SK-N-SH (cell line): ENCODE measurements at regions of chr11 and their contacts with region 1.

Region 1: DNA sequence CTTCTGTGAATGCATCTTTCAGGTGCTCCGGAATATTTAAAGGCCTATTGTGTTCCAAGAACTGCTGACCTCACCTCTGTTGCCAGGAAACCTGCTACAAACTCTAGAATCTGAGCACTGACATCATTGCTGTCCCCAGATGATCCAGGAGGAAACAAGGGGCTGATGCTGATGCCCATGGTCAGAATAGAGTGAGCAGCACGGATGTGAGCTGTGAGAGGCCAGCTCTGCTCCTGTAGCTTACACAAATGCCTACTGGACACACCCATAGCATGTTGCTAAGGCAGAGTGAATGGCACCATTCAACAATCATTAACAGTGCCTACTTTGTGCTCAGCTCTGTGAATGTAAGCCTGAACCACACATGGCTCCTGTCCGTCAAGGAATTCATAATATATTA is 276.7 kb upstream of the API5 start:
- DNase-seq: no peak
- H3K4me3 ChIP-seq: no peak overlapping the region
- H3K27ac ChIP-seq: no peak overlapping the region
- H3K4me1 ChIP-seq: no peaks in the 10 kb centered on the region; a peak in 1 of 4 replicates
- H3K27me3 ChIP-seq: no peaks in the 10 kb centered on the region
- CTCF ChIP-seq: no peak
- EP300 ChIP-seq: no peak
- RAD21 ChIP-seq: no peak

Region 2: GRCh38 chr11:43021466-43021865 is 13.6 kb before region 1 on chr11:
- CTCF ChIA-PET with region 1: interaction called, 15 read pairs
- POLR2A ChIA-PET with region 1: no interaction called
- DNase-seq: peak; percentile 41
- H3K4me3 ChIP-seq: no peak overlapping the region
- H3K27ac ChIP-seq: no peak overlapping the region; a peak in 1 of 4 replicates
- H3K4me1 ChIP-seq: no peaks in the 10 kb centered on the region; a peak in 2 of 4 replicates
- H3K27me3 ChIP-seq: no peaks in the 10 kb centered on the region
- CTCF ChIP-seq: no peak
- EP300 ChIP-seq: no peak
- RAD21 ChIP-seq: peak; percentile 72